ENCODE measurements at regions of chr16 and their contacts with region 1.

Region 1: GRCh38 chr16:74650966-74651567 is 15.6 kb downstream of the RFWD3 start:
- DNase-seq: peak; percentile 27
- H3K4me3 ChIP-seq: no peak overlapping the region
- H3K27ac ChIP-seq: no peak overlapping the region
- H3K4me1 ChIP-seq: peaks cover 5% of the 10 kb centered on the region
- H3K27me3 ChIP-seq: no peaks in the 10 kb centered on the region
- CTCF ChIP-seq: peak in 1 of 2 donors; percentile 27
- POLR2A ChIP-seq: no peak

Region 2: GRCh38 chr16:74226338-74226954 is 424.6 kb before region 1 on chr16:
- CTCF ChIA-PET with region 1: no interaction called
- POLR2A ChIA-PET with region 1: no interaction called
- dilution Hi-C with region 1: no loop called
- intact Hi-C with region 1: no loop called
- DNase-seq: peak; percentile 36
- H3K4me3 ChIP-seq: no peak overlapping the region
- H3K27ac ChIP-seq: no peak overlapping the region
- H3K4me1 ChIP-seq: no peaks in the 10 kb centered on the region
- H3K27me3 ChIP-seq: no peaks in the 10 kb centered on the region
- CTCF ChIP-seq: peak; percentile 14 to 16
- POLR2A ChIP-seq: no peak

Region 3: DNA sequence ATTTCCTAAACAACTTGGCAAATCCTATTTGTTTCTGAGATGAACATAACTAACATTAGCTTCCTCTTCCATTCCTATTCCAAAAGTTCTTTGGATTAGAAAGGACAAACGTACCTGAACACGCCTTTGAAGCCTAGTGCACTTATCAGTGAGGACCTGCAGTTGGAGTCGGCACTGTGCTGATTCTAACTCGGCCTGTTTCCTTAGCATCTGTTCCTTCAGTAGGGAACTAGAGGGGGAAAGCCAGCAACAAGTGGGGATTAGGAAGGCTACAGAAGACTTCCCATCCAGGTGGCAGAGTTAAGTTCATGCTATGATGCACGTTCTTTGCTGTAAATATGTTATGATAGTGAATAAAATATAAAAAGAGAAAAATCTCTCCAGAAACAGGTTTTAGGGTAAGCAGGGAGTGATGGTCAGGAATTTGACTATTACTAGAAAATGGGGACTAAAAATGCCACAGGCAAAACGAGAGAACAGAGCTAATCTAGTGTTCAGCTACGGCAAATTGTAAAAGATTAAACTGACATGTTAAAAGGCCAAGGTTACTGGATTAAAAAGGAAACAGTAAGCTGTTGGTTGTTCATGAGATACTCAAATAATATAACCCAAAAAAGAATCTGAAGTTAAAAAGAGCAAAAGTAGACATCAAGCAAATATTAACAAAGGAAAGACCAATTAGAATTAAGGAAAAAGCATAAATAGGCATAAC is 13.2 kb before region 1 on chr16:
- CTCF ChIA-PET with region 1: interaction called, 17 read pairs
- POLR2A ChIA-PET with region 1: no interaction called
- dilution Hi-C with region 1: no loop called
- intact Hi-C with region 1: no loop called
- DNase-seq: no peak
- H3K4me3 ChIP-seq: no peak overlapping the region
- H3K27ac ChIP-seq: no peak overlapping the region
- H3K4me1 ChIP-seq: no peaks in the 10 kb centered on the region
- H3K27me3 ChIP-seq: no peaks in the 10 kb centered on the region
- CTCF ChIP-seq: no peak
- POLR2A ChIP-seq: no peak

Region 4: DNA sequence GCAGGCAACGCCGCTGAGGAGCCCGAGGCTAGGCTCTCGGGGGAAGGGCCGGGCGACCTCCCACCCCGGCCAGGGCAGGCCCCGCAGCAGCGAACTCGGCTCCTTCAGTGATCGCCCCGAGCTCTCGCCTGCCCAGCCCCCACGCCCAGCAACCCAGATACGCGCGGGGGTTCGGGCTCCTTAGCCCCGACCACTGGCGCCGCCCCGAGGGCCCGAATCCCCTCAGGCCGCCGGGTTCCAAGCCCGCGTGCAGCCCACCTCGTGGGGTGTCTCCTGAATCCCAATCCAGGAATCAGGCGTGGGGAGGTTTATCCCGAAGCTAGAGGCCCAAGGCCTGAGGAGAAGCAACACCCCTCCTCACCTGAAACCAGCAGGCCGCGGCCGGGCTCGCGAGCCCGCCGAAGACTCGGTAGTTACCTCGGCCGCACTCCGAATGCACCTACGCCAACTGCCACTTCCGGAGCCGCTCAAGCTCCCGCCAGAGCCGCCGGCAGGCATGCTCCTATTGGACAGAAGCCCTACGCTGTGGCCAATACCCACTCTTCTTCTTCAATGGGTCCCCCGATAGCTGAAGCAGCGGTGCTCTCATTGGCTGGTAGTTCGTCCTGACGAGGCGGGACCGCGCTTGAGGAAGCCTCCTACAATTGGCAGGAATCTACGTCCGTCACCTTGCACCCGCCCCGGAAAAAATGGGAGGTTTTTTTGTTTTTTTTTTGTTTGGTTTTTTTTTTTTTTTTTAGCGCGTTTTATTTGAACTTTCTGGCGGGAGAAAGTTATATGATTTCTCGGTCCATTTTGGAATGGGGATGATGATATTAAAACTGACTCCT is 15.6 kb after region 1 on chr16 and contains the start of gene RFWD3:
- CTCF ChIA-PET with region 1: interaction called, 12 read pairs
- POLR2A ChIA-PET with region 1: interaction called, 3 read pairs
- dilution Hi-C with region 1: no loop called
- intact Hi-C with region 1: no loop called
- DNase-seq: peak; percentile 98
- H3K4me3 ChIP-seq: peak within 1 kb of the TSS; percentile 84 to 95 (median 88)
- H3K27ac ChIP-seq: peak within 1 kb of the TSS; percentile 62
- H3K4me1 ChIP-seq: peaks cover 4% of the 10 kb centered on the region
- H3K27me3 ChIP-seq: no peaks in the 10 kb centered on the region
- CTCF ChIP-seq: peak in 1 of 2 donors; percentile 0
- POLR2A ChIP-seq: peak; percentile 88
- total RNA-seq, gene RFWD3: 47.6 and 51.6 TPM in 2 replicates

Measured in endothelial cell of umbilical vein (primary cell).